Activated CD4-positive, alpha-beta T cell treated with anti-CD3 and anti-CD28 coated beads, Interleukin-2, amount 10 ng/mL, durations not matched to agents 24 days and 14 days (primary cell): ENCODE measurements at regions of chr19 and their contacts with region 1.

Region 1: DNA sequence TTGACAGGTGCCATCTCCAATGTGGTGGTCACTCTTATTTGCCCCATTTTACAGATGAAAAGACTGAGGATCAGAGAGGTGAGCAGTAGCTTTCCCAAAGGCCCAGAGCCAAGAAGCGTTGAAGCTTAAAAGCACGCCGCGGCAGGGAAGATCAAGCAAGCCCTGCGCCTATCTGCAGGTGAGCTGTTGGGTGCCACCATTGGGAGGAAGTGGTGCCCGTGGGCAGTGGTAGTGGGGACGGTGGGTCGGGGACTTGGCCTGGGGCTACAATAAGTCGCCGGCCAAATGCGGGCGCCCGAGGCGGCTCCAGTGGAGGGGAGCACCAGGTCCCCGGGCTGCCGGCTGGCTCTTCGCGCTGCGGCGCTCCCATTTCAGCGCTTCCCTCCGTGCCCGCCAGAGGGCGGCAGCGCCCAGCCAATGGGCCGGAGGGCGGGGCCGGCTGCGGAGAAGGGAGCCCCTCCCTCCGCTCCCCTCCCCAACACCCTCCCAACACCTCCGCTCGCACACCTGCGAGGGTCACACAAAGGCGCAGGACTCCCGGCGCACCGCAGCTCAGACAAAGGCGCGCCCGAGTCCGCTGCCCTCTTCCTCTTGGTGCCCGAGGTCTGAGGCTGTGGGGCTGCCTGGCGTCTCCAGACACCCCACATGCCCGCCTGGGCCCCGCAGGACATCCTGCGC is 744 bp upstream of the POU2F2 start:
- DNase-seq: peak; percentile 97
- H3K4me3 Mint-ChIP-seq: peak overlapping the region; percentile 88
- H3K27ac Mint-ChIP-seq: peak overlapping the region; percentile 81
- H3K4me1 Mint-ChIP-seq: peaks cover 59% of the 10 kb centered on the region
- H3K27me3 Mint-ChIP-seq: no peaks in the 10 kb centered on the region

Region 2: DNA sequence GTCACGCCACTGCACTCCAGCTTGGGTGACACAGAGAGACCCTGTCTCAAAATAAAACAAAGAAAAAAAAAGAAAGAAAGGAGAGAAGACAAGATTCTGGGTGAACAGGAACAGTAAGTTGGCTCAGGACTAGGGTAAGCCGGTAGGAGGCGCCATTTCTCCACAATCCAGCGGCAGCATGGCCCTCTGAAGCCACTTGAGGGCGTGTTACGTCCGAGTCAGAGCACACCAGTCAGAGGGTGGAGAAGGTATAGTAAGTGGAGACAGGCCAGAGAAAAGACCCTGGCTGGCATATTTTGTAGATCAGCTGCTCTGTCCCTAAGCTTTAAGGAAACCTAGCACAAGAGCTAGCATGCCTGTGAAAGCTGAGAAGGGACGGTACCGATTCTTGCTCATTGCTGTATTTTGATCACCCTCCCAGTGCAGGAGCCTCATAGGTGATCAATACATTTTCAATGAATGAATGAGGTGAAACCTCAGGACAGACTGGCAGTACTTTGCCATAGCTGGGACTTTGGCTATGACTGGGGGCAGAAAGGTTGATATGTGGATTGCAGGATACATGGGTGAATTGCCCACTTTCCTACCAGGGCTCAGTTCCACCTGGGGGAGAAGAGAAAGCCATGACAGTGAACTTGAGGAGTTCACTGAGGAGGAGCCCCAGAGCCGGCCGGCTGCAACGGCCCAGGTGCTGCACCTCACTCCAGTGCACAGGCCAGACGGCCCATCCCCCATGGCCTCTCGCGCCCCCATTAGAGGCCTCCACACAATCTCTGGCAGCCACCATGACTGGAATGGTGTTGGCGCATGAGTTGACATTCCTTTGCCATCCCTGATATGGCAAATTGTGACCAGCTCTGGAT is 24.2 kb before region 1 on chr19:
- intact Hi-C with region 1: loop called (anchors 1 kb)
- DNase-seq: peak; percentile 96
- H3K4me3 Mint-ChIP-seq: no peak overlapping the region
- H3K27ac Mint-ChIP-seq: peak overlapping the region; percentile 4
- H3K4me1 Mint-ChIP-seq: peaks cover 49% of the 10 kb centered on the region
- H3K27me3 Mint-ChIP-seq: no peaks in the 10 kb centered on the region

Region 3: GRCh38 chr19:42176990-42177685 is 44.1 kb after region 1 on chr19:
- intact Hi-C with region 1: loop called (anchors 2 kb)
- DNase-seq: peak; percentile 94
- H3K4me3 Mint-ChIP-seq: peak overlapping the region; percentile 90
- H3K27ac Mint-ChIP-seq: no peak overlapping the region
- H3K4me1 Mint-ChIP-seq: peaks cover 16% of the 10 kb centered on the region
- H3K27me3 Mint-ChIP-seq: peaks cover 41% of the 10 kb centered on the region

Region 4: GRCh38 chr19:42219812-42220750 is 87.1 kb after region 1 on chr19 and contains the start of gene ZNF526:
- intact Hi-C with region 1: loop called (anchors 1 kb)
- DNase-seq: peak; percentile 100
- H3K4me3 Mint-ChIP-seq: peak within 1 kb of the TSS; percentile 96
- H3K27ac Mint-ChIP-seq: peak within 1 kb of the TSS; percentile 94
- H3K4me1 Mint-ChIP-seq: peaks cover 50% of the 10 kb centered on the region
- H3K27me3 Mint-ChIP-seq: peaks cover 2% of the 10 kb centered on the region
- total RNA-seq, gene ZNF526: 19.0 and 20.1 TPM in 2 replicates

Region 5: DNA sequence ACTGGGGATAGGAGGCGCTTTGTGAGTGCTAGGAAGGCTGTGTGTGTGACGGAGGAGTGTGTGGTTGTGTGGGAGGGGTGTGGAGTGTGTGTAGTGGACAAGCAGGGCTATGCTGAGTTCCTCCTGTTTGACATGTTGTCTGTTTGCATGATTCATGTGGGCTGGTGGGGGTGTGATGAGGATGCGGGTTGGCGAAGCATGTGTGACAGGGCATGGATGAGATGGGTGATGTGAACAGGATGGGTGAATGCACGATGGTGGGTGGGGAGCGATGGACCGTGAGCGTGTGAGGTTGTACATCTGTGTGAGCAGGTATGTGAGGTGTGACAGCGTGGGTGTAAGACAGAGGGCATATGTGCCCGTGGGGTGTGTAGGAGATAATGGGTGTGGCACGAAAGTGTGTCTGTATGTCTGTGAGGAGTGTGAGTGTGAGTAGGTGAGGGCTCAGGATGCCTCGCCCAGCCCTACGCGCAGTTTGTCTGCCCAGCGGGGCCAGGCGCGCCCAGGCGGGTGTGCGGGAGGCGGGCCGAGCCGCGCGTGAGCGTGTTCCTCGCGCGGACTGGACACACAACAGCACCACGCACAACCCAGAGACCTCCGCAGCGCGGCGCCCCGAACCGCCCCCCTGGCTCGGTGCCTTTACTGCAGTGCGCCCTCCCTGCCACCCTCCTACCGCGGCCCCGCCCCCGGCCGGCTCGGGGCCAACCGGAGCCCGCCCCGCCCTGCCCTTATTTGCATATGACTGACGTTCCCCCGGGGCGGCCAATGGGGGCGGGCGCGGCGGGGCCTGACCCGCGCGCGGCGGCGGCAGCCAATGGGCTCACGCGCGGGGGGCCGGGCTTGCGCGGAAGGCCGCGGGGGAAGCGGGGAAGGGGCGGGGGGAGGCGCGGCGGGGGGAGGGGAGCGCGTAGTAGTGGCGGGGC is 150.4 kb after region 1 on chr19:
- intact Hi-C with region 1: loop called (anchors 2 kb)
- DNase-seq: peak; percentile 98
- H3K4me3 Mint-ChIP-seq: no peak overlapping the region
- H3K27ac Mint-ChIP-seq: no peak overlapping the region
- H3K4me1 Mint-ChIP-seq: peaks cover 39% of the 10 kb centered on the region
- H3K27me3 Mint-ChIP-seq: no peaks in the 10 kb centered on the region

Region 6: GRCh38 chr19:42325273-42325895 is 192.4 kb after region 1 on chr19 and contains the start of gene MEGF8:
- intact Hi-C with region 1: loop called (anchors 1 kb)
- DNase-seq: peak; percentile 100
- H3K4me3 Mint-ChIP-seq: peak within 1 kb of the TSS; percentile 93
- H3K27ac Mint-ChIP-seq: peak within 1 kb of the TSS; percentile 87
- H3K4me1 Mint-ChIP-seq: peaks cover 16% of the 10 kb centered on the region
- H3K27me3 Mint-ChIP-seq: peaks cover 30% of the 10 kb centered on the region
- total RNA-seq, gene MEGF8: 8.4 and 9.1 TPM in 2 replicates